ENCODE measurements at regions of chr12 and their contacts with region 1.

Region 1: DNA sequence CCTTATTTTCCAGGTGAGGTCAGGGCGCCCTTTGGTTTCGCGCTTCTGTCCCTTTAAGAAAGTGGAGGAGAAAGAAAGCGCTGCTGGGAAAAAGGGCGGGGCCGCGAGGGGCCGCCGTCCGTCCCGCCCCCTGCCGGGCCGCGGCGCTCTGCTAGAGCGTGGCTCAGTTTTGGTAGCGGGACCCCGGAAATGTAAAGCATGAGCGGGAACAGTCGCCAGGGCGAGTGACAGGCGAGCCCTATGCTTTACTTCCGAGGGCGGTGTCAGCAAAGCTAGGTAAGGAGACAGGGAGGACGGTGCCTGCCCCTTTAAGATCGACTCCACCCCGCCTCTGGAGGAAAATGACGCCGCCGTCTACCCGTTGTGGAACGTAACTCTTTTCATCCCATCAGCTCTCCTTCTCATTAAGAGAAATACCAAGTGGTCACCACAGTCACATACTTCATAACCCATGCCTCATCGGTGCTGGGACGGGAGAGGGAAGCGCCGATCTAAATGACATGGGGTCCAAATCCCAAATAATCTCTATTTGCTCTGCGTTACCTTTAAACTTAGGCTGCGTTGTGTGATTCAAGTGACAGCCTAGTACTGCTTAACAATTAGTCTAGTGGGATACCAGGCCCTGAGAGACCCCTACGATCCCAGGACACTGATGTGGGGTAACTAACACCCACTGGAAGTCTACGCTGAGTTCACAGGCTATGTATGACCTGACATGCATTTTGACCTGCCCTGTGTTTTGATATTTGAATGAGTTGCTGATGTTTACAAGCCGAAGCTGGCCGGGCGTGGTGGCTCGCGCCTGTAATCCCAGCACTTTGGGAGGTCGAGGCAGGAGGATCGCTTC is at the start of gene ETFBKMT:
- DNase-seq: peak; percentile 90
- H3K4me3 ChIP-seq: peak within 1 kb of the TSS; percentile 46 to 73 (median 50)
- H3K27ac ChIP-seq: peak within 1 kb of the TSS; percentile 91 to 97 (median 95)
- H3K4me1 ChIP-seq: peaks cover 5% of the 10 kb centered on the region in 2 donors
- H3K27me3 ChIP-seq: no peaks in the 10 kb centered on the region
- CTCF ChIP-seq: peak in 4 of 6 experiments; percentile 20 to 56 (median 30)
- POLR2A ChIP-seq: peak in 1 of 2 donors; percentile 52
- total RNA-seq, gene ETFBKMT: 5.8 to 9.8 (median 6.4) TPM

Region 2: GRCh38 chr12:31959161-31959700 is 299.9 kb after region 1 on chr12 and contains the start of gene RESF1:
- intact Hi-C with region 1: loop called (anchors 5 kb)
- DNase-seq: peak; percentile 92
- H3K4me3 ChIP-seq: peak within 1 kb of the TSS; percentile 10 to 61 (median 48)
- H3K27ac ChIP-seq: peak within 1 kb of the TSS; percentile 84 to 91 (median 86)
- H3K4me1 ChIP-seq: peaks cover 31 to 34% of the 10 kb centered on the region in 2 donors
- H3K27me3 ChIP-seq: no peaks in the 10 kb centered on the region
- CTCF ChIP-seq: no peak
- POLR2A ChIP-seq: peak; percentile 34 to 85
- total RNA-seq, gene RESF1: 62.5 to 75.1 (median 63.3) TPM

Region 3: DNA sequence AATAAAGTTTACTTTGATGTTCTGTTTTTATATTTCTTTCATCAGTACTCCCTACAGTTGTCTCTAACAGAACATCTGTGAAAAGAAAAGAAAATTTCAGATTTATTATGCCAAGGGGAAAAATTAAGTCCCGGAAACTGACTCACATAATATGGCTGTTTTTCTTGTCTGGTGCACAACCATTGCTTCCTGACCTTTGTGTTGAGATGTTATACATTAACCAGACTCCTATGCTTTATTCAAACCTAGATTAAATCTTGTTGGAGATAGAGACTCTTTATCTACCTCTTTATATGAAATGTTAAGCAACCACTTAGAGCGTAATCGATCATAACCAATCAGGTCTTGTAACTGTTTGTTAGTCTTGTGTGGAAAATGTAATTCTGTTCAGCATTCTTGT is 409.8 kb after region 1 on chr12:
- intact Hi-C with region 1: loop called (anchors 10 kb)
- DNase-seq: no peak
- H3K4me3 ChIP-seq: no peak overlapping the region
- H3K27ac ChIP-seq: no peak overlapping the region
- H3K4me1 ChIP-seq: no peaks in the 10 kb centered on the region
- H3K27me3 ChIP-seq: no peaks in the 10 kb centered on the region
- CTCF ChIP-seq: no peak
- POLR2A ChIP-seq: no peak

Region 4: DNA sequence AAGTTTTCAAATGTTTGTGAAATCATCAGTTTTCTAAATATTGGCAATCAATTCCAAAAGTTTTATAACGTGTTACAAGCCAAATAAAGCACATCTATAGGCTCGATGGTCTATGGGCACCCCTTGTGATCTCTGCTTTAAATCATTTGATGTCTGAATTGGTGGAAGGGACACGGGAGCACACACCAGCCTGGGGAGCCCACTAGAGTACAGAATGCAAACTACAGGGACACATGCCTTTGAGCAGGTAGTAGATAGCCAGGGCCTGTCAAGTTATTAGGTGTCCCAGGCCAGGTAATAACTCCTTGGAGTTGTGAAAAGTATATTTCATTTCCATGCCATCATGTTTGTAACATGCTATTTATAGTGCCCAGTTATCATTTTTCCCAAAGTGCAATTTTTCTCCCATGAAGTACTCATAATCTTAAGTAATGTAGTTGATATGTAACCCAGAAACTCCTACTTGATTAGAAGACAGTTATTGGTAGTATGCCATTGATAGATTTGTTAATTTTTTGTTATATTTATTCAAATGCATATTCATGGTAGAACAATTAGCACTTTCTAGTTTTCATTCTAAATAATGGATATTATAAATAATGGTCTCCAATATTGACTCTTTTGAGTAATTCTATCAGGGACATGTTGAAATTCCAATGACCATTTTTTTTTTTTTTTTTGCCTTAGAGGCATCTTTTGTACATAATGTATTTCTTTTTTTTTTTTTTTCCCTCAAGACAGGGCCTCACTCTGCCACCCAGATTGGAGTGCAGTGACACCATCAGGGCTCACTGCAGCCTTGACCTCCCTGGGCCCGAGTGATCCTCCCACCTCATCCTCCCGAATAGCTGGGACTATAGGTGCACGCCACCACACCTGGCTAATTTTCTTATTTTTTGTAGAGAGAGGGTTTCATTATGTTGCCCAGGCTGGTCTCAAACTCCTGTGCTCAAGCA is 643.2 kb after region 1 on chr12:
- intact Hi-C with region 1: loop called (anchors 10 kb)
- DNase-seq: peak in 1 of 2 donors; percentile 11
- H3K4me3 ChIP-seq: no peak overlapping the region
- H3K27ac ChIP-seq: no peak overlapping the region
- H3K4me1 ChIP-seq: no peaks in the 10 kb centered on the region
- H3K27me3 ChIP-seq: no peaks in the 10 kb centered on the region
- CTCF ChIP-seq: peak in 3 of 6 experiments; percentile 38 to 52 (median 45)
- POLR2A ChIP-seq: no peak